ENCODE measurements at regions of chr5 and their contacts with region 1.

Region 1: DNA sequence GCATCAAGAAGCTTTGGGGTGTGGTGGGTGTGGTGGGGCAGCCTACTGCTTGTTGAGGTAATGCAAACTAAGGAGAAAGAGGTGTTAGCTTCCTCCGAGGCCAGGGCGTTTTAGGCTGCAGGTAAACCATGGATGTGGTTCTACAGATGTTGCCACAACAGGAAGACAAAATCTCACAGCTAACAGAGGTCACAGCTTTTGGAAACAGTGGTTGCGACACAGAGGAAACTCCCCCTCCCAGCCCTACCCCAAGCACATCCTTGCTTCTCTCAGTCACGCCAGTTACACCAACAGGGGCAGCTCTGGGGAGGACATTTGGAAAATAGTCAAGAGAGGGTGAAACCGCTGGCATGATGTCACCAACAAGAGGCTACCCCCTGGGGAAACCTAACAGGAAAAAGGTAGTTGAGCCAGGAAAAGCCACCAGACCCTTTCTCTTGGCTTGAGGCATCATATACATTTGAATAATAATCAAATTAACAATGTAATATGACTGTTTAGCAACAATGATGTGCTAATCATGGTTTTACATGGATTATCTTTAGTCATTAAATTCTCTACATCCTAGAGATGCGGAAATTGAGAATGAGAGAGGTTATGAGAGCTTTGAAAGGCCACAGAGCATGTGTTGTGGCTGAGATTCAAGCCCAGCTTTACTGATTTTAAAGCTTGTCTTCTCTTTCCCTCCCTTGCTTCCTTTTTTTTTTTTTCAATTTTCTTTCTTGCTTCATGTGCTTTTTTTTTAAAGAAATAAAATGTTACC is 82.2 kb upstream of the IL12B start:
- DNase-seq: peak; percentile 83 to 93 (median 86)
- H3K4me3 ChIP-seq: no peak overlapping the region
- H3K4me3 Mint-ChIP-seq: peak overlapping the region in 7 of 8 donors; percentile 40 to 81 (median 71)
- H3K27ac ChIP-seq: peak overlapping the region; percentile 14
- H3K27ac Mint-ChIP-seq: peak overlapping the region; percentile 91 to 96 (median 94)
- H3K4me1 ChIP-seq: peaks cover 56% of the 10 kb centered on the region
- H3K4me1 Mint-ChIP-seq: peaks cover 41 to 62% (median 51%) of the 10 kb centered on the region in 4 donors
- H3K27me3 ChIP-seq: no peaks in the 10 kb centered on the region
- H3K27me3 Mint-ChIP-seq: no peaks in the 10 kb centered on the region

Region 2: DNA sequence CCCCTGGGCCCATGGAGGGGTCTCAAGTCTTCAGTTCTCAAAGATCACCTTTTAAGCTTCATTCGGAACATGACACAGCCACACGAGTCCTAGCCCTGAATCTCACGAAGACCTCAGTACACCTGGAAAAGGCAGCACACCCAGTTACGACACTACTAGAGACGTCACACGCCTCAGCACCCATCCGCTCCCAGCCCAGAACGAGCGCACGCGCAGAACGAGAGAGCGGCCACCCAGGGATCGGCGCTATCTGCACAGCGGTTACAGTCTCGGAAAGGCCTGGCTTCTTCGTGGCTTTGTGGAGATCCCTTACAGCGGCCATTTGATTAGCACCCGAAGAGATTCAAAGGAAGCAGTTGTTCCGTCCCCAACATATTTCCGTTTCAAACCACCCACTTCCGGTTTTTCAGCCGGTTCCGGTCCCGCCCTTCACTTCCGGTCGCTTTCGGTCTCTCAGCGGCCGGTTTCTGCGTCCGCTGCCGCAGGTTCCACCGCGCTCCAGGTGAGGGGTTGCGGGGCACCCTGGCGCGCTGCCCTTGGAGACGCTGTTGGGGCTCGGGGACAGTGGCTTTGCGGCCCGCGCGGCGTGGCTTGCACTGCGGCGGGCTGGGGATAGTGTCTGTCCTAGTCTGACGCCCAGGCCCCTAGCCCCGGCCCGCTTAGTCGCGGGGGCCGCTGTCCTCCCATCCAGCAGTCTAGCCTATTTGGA is 149.5 kb before region 1 on chr5 and contains the start of gene UBLCP1:
- CTCF ChIA-PET with region 1: interaction called, 4 read pairs
- POLR2A ChIA-PET with region 1: interaction called, 6 read pairs
- intact Hi-C with region 1: loop called (anchors 5 kb)
- DNase-seq: peak; percentile 82 to 87 (median 86)
- H3K4me3 ChIP-seq: peak within 1 kb of the TSS; percentile 67 to 75
- H3K4me3 Mint-ChIP-seq: peak within 1 kb of the TSS; percentile 98 to 99 (median 98)
- H3K27ac ChIP-seq: peak within 1 kb of the TSS; percentile 89
- H3K27ac Mint-ChIP-seq: peak within 1 kb of the TSS; percentile 96 to 100 (median 99)
- H3K4me1 ChIP-seq: peaks cover 27% of the 10 kb centered on the region
- H3K4me1 Mint-ChIP-seq: peaks cover 34 to 66% (median 46%) of the 10 kb centered on the region in 4 donors
- H3K27me3 ChIP-seq: no peaks in the 10 kb centered on the region
- H3K27me3 Mint-ChIP-seq: no peaks in the 10 kb centered on the region
- total RNA-seq, gene UBLCP1: 31.6 to 33.4 TPM

Region 3: GRCh38 chr5:159341914-159342313 is 70.6 kb before region 1 on chr5:
- CTCF ChIA-PET with region 1: interaction called, 12 read pairs
- POLR2A ChIA-PET with region 1: interaction called, 24 read pairs
- intact Hi-C with region 1: loop called (anchors 1 kb)
- DNase-seq: peak; percentile 74 to 92 (median 79)
- H3K4me3 ChIP-seq: no peak overlapping the region
- H3K4me3 Mint-ChIP-seq: peak overlapping the region in 7 of 8 donors; percentile 28 to 88 (median 47)
- H3K27ac ChIP-seq: no peak overlapping the region
- H3K27ac Mint-ChIP-seq: peak overlapping the region; percentile 79 to 98 (median 87)
- H3K4me1 ChIP-seq: peaks cover 66% of the 10 kb centered on the region
- H3K4me1 Mint-ChIP-seq: peaks cover 54 to 89% (median 67%) of the 10 kb centered on the region in 4 donors
- H3K27me3 ChIP-seq: no peaks in the 10 kb centered on the region
- H3K27me3 Mint-ChIP-seq: no peaks in the 10 kb centered on the region

Region 4: GRCh38 chr5:159427180-159428012 is 14.9 kb after region 1 on chr5:
- CTCF ChIA-PET with region 1: interaction called, 5 read pairs
- POLR2A ChIA-PET with region 1: interaction called, 22 read pairs
- intact Hi-C with region 1: no loop called
- DNase-seq: peak in 1 of 5 donors; percentile 25
- H3K4me3 ChIP-seq: no peak overlapping the region
- H3K4me3 Mint-ChIP-seq: peak overlapping the region in 6 of 8 donors; percentile 3 to 71 (median 31)
- H3K27ac ChIP-seq: no peak overlapping the region
- H3K27ac Mint-ChIP-seq: peak overlapping the region; percentile 1 to 92 (median 78)
- H3K4me1 ChIP-seq: peaks cover 21% of the 10 kb centered on the region
- H3K4me1 Mint-ChIP-seq: peaks cover 14 to 38% (median 22%) of the 10 kb centered on the region in 4 donors
- H3K27me3 ChIP-seq: no peaks in the 10 kb centered on the region
- H3K27me3 Mint-ChIP-seq: peaks cover 1% of the 10 kb centered on the region in 2 donors

Region 5: GRCh38 chr5:159469496-159470372 is 57.3 kb after region 1 on chr5:
- CTCF ChIA-PET with region 1: no interaction called
- POLR2A ChIA-PET with region 1: interaction called, 3 read pairs
- intact Hi-C with region 1: loop called (anchors 2 kb)
- DNase-seq: peak; percentile 11 to 49 (median 38)
- H3K4me3 ChIP-seq: peak overlapping the region in 1 of 2 donors; percentile 40
- H3K4me3 Mint-ChIP-seq: peak overlapping the region; percentile 44 to 75 (median 67)
- H3K27ac ChIP-seq: no peak overlapping the region
- H3K27ac Mint-ChIP-seq: peak overlapping the region in 5 of 7 donors; percentile 24 to 55 (median 42)
- H3K4me1 ChIP-seq: peaks cover 22% of the 10 kb centered on the region
- H3K4me1 Mint-ChIP-seq: peaks cover 16 to 32% (median 24%) of the 10 kb centered on the region in 4 donors
- H3K27me3 ChIP-seq: no peaks in the 10 kb centered on the region
- H3K27me3 Mint-ChIP-seq: no peaks in the 10 kb centered on the region

Region 6: DNA sequence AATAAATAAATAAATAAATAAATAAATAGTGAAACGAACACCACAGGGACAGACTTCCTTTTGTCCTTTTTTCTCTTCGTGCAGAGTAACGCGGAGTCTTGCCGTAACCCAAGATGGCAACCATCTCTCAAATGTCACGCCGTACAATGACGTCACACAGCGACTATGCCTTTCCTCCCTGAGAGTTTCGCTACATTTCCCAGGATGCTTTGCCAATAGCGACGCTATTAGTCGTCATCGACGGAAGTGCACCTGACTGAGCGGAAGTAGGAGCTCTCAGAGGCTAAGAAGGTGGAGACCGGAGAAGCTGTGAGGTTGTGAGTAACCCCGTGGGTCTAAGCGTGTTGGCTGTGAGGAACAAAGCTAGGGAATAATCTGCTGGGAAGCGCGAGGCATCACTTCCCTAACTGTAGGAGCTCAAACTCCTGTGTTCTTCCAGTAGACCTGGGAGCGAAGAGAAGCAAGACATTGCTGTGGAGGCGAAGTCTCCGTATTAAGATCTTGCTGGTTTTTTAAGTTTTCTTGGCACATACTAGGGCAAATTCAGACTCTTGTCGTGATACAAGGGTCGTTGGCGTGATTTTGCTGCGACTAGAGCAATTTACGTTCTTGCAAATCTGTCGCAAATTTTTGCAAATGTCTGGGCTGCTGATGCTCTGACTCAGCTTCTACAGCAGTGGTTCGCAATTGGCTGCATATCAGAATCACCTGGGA is 596.6 kb after region 1 on chr5 and contains the start of gene TTC1:
- CTCF ChIA-PET with region 1: no interaction called
- POLR2A ChIA-PET with region 1: no interaction called
- intact Hi-C with region 1: loop called (anchors 1 kb)
- DNase-seq: peak; percentile 89 to 96 (median 94)
- H3K4me3 ChIP-seq: peak within 1 kb of the TSS; percentile 85 to 96
- H3K4me3 Mint-ChIP-seq: peak within 1 kb of the TSS; percentile 94 to 100 (median 96)
- H3K27ac ChIP-seq: peak within 1 kb of the TSS; percentile 76
- H3K27ac Mint-ChIP-seq: peak within 1 kb of the TSS; percentile 88 to 99 (median 98)
- H3K4me1 ChIP-seq: peaks cover 30% of the 10 kb centered on the region
- H3K4me1 Mint-ChIP-seq: peaks cover 24 to 35% (median 29%) of the 10 kb centered on the region in 4 donors
- H3K27me3 ChIP-seq: no peaks in the 10 kb centered on the region
- H3K27me3 Mint-ChIP-seq: no peaks in the 10 kb centered on the region
- total RNA-seq, gene TTC1: 47.5 to 47.9 TPM

Region 7: DNA sequence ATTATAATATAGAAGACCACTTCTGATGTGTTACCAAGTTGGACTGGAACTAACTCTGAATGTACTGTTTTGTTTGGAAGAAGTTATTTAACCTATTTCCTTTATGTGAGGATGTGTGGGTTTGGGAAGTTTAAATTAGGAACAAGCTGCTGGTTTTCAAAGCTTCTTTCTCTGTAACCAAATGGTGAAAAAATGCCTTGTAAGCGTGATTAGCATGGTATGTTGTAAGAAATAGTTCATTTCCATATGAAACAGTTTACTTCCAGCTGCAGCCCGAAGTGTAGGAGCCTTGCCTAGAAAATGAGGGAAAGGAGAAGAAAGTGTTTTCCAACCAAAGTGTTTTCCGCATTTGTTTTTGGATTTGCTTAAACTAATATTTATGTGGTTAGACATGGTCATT is 632.5 kb after region 1 on chr5:
- CTCF ChIA-PET with region 1: no interaction called
- POLR2A ChIA-PET with region 1: no interaction called
- intact Hi-C with region 1: no loop called
- DNase-seq: no peak
- H3K4me3 ChIP-seq: no peak overlapping the region
- H3K4me3 Mint-ChIP-seq: no peak overlapping the region
- H3K27ac ChIP-seq: no peak overlapping the region
- H3K27ac Mint-ChIP-seq: no peak overlapping the region
- H3K4me1 ChIP-seq: no peaks in the 10 kb centered on the region
- H3K4me1 Mint-ChIP-seq: peaks cover 0 to 5% (median 3%) of the 10 kb centered on the region in 4 donors
- H3K27me3 ChIP-seq: no peaks in the 10 kb centered on the region
- H3K27me3 Mint-ChIP-seq: no peaks in the 10 kb centered on the region

Measured in CD4-positive, alpha-beta memory T cell (primary cell).